Activated T-helper 1 cell treated with anti-CD3 and anti-CD28 coated beads, Interleukin-12 subunit alpha, Interleukin-12 subunit beta, Interleukin-2, Interleukin-4 antibody, amounts not matched to agents 30 ng/mL and 10 ng/mL and 1 ng/mL, durations not matched to agents 14 hours and 24 hours and 36 hours (primary cell): ENCODE measurements at regions of chr17 and their contacts with region 1.

Region 1: DNA sequence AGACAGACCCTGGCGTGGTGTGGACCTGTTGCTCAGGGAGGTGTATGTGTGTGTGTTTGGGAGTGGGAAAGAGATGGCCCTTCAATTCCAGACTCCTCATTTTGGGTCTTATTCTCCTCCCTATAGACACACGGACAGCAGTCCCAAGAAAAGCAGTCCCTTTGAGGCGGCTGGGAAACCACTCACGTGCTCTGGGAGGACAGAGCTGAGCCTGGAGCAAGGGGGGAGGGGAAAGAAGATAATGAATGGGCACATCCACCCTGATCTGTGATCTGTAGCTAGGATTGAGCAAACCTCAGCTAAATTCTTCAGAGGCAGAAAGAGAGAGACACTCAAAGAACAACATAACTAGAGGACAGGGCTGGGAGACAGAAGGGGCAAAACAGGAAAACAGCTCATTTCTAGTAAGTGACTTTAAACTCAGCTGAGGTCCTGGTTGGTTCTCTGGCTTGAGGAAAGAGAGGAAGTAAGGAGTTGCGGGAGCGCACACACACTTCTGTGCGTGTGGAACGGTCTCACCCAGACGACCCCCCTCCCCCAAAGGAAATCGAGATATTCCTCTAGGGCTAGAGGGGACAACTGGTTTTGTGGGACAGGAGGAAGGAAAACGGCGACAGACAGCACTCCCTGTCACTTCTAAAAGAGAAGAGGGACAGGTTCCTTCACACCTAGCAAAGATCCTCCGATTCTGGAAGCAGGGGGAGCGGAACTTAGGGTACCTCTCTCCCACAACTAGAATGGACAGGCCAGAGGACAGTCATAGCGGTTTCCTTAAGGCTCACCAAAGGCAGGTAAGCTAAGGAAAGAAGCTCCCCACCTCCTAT is 658 bp downstream of the RAB5C start:
- DNase-seq: no peak
- H3K4me3 Mint-ChIP-seq: peak overlapping the region; percentile 89
- H3K27ac Mint-ChIP-seq: peak overlapping the region; percentile 75
- H3K4me1 Mint-ChIP-seq: peaks cover 25% of the 10 kb centered on the region
- H3K27me3 Mint-ChIP-seq: no peaks in the 10 kb centered on the region

Region 2: DNA sequence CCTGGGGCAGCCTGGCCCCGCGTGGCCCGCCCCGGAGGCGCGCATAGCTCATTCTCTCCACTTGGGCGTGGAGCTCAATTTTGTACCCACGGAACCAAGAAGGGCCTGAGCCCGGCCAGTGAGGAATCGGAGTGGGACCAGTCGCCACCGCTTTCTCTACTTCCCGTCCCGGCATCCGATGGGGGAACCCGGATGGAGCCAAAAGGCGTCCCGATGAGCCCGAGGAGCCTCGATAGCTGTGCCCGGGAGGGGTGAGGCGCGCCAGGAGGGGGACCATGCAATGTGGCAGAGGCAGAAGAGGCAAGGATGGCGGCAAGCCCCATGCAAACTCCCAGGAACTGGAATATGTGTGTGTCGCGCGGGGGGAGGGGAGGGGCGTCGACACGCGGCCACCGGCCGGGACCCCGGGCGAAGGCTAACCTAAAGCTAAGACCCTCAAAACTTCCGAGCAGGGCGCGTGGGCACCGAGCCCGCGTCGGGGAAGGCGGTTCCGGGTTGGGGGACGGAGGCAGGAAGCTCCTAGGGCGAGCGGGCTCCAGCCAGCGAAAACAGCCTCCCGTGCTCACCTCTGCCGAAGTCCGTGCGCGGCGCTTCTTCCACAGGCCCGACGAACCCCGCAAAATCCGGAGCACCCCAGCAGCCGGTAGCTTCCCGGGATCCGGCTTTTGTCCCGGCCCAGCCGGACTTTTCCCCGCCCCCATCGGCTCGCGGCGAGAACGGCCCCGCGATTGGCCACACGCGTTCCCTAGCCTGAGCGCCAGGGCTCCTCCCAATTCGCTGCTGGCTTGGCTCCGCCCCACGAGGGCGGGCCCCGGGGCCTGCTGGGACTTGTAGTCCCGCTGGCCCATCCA is 235.6 kb before region 1 on chr17 and contains the start of gene ACLY:
- intact Hi-C with region 1: loop called (anchors 2 kb)
- DNase-seq: peak; percentile 98
- H3K4me3 Mint-ChIP-seq: peak within 1 kb of the TSS; percentile 95
- H3K27ac Mint-ChIP-seq: peak within 1 kb of the TSS; percentile 90
- H3K4me1 Mint-ChIP-seq: peaks cover 32% of the 10 kb centered on the region
- H3K27me3 Mint-ChIP-seq: no peaks in the 10 kb centered on the region
- total RNA-seq, gene ACLY: 200 and 211 TPM in 2 replicates

Region 3: GRCh38 chr17:41992576-41992975 is 161.6 kb before region 1 on chr17:
- intact Hi-C with region 1: no loop called
- DNase-seq: no peak
- H3K4me3 Mint-ChIP-seq: no peak overlapping the region
- H3K27ac Mint-ChIP-seq: no peak overlapping the region
- H3K4me1 Mint-ChIP-seq: peaks cover 14% of the 10 kb centered on the region
- H3K27me3 Mint-ChIP-seq: no peaks in the 10 kb centered on the region

Region 4: GRCh38 chr17:42023524-42024349 is 130.4 kb before region 1 on chr17:
- intact Hi-C with region 1: no loop called
- DNase-seq: no peak
- H3K4me3 Mint-ChIP-seq: no peak overlapping the region
- H3K27ac Mint-ChIP-seq: no peak overlapping the region
- H3K4me1 Mint-ChIP-seq: peaks cover 31% of the 10 kb centered on the region
- H3K27me3 Mint-ChIP-seq: no peaks in the 10 kb centered on the region

Region 5: GRCh38 chr17:42039794-42040763 is 114.1 kb before region 1 on chr17:
- intact Hi-C with region 1: no loop called
- DNase-seq: no peak
- H3K4me3 Mint-ChIP-seq: no peak overlapping the region
- H3K27ac Mint-ChIP-seq: no peak overlapping the region
- H3K4me1 Mint-ChIP-seq: no peaks in the 10 kb centered on the region
- H3K27me3 Mint-ChIP-seq: peaks cover 6% of the 10 kb centered on the region

Region 6: GRCh38 chr17:42112552-42113176 is 41.5 kb before region 1 on chr17 and contains the start of gene DHX58:
- intact Hi-C with region 1: loop called (anchors 1 kb)
- DNase-seq: peak; percentile 83
- H3K4me3 Mint-ChIP-seq: peak within 1 kb of the TSS; percentile 85
- H3K27ac Mint-ChIP-seq: peak within 1 kb of the TSS; percentile 86
- H3K4me1 Mint-ChIP-seq: peaks cover 50% of the 10 kb centered on the region
- H3K27me3 Mint-ChIP-seq: no peaks in the 10 kb centered on the region
- total RNA-seq, gene DHX58: 26.9 and 28.4 TPM in 2 replicates

Region 7: GRCh38 chr17:42120770-42121769 is 33.1 kb before region 1 on chr17 and contains the start of gene KAT2A:
- intact Hi-C with region 1: loop called (anchors 1 kb)
- DNase-seq: peak; percentile 68
- H3K4me3 Mint-ChIP-seq: peak within 1 kb of the TSS; percentile 81
- H3K27ac Mint-ChIP-seq: peak within 1 kb of the TSS; percentile 86
- H3K4me1 Mint-ChIP-seq: peaks cover 36% of the 10 kb centered on the region
- H3K27me3 Mint-ChIP-seq: no peaks in the 10 kb centered on the region
- total RNA-seq, gene KAT2A: 70.8 and 76.9 TPM in 2 replicates

Region 8: GRCh38 chr17:42132941-42133340 is 21.2 kb before region 1 on chr17:
- intact Hi-C with region 1: loop called (anchors 2 kb)
- DNase-seq: no peak
- H3K4me3 Mint-ChIP-seq: peak overlapping the region; percentile 31
- H3K27ac Mint-ChIP-seq: peak overlapping the region; percentile 64
- H3K4me1 Mint-ChIP-seq: peaks cover 52% of the 10 kb centered on the region
- H3K27me3 Mint-ChIP-seq: no peaks in the 10 kb centered on the region

Region 9: GRCh38 chr17:42193969-42194899 is 40.1 kb after region 1 on chr17 and contains the start of gene GHDC:
- intact Hi-C with region 1: loop called (anchors 1 kb)
- DNase-seq: peak; percentile 80
- H3K4me3 Mint-ChIP-seq: peak within 1 kb of the TSS; percentile 96
- H3K27ac Mint-ChIP-seq: peak within 1 kb of the TSS; percentile 95
- H3K4me1 Mint-ChIP-seq: peaks cover 15% of the 10 kb centered on the region
- H3K27me3 Mint-ChIP-seq: no peaks in the 10 kb centered on the region
- total RNA-seq, gene GHDC: 15.2 and 15.5 TPM in 2 replicates

Region 10: DNA sequence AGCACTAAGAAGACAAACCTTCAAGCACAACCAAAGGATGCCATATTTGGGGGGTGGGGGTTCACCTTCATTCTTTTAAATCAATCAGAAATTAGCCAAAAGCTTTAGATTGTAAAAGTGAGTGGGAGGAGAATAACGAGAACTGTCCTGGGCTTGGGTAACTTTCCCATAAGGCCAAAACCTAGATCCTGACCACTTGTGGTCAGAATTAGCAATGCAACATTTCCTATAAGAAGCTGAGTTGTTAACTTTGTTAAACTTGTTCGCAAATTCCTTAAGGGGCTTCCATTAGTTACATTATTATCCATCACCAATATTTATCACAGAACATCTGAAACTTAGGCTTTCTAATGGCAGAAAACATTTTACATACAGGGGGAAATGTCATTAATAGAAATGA is 97.0 kb after region 1 on chr17:
- intact Hi-C with region 1: no loop called
- DNase-seq: no peak
- H3K4me3 Mint-ChIP-seq: no peak overlapping the region
- H3K27ac Mint-ChIP-seq: peak overlapping the region; percentile 99
- H3K4me1 Mint-ChIP-seq: peaks cover 68% of the 10 kb centered on the region
- H3K27me3 Mint-ChIP-seq: no peaks in the 10 kb centered on the region